SK-N-SH (cell line): ENCODE measurements at regions of chr13 and their contacts with region 1.

Region 1: DNA sequence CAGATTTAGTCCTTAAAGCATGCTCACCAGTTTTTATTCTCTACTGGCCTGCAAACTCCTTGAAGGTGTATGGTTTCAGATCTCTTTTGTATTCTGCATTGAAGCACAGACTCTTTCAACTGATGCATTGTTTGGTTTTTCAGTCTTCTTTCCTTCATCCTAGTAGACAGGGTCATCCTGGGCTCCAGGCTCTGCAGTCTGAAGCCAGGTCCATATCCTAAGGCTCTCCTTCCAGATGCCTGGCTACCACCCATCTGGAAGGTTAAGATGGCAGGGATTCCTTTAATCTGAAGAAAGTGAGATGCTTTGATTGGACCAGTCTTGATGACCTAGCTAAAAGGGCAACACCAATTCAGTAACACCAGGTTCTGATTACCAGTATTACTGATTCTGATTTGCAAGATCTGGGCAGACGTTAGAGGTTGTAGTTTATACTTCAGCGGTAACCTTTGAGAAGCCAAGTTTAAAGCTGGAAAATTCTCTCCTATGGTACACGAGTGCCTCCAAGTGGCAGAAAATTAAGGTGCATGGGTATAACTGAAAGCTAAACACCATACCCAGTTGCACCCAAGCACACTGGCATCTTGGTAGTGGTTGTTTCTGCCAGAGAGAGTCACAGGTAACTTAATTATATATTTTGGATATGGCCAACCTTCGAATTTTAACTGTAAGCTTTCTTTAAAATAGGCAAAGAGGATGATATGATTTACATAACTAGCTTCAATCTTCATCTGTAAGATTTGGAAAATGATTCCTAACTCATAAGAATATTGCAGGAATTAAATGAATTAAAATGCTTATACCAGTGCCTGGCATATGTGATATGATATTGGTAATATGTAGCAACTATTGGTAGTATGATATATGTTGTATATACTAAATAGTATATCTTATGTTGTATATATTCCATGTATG is 1651.9 kb upstream of the MIR17HG start:
- DNase-seq: peak; percentile 42
- H3K4me3 ChIP-seq: no peak overlapping the region
- H3K27ac ChIP-seq: no peak overlapping the region
- H3K4me1 ChIP-seq: peaks cover 0 to 5% of the 10 kb centered on the region in 2 experiments; a peak in 2 of 4 replicates
- H3K27me3 ChIP-seq: no peaks in the 10 kb centered on the region
- CTCF ChIP-seq: peak; percentile 74
- EP300 ChIP-seq: no peak
- RAD21 ChIP-seq: peak; percentile 91

Region 2: DNA sequence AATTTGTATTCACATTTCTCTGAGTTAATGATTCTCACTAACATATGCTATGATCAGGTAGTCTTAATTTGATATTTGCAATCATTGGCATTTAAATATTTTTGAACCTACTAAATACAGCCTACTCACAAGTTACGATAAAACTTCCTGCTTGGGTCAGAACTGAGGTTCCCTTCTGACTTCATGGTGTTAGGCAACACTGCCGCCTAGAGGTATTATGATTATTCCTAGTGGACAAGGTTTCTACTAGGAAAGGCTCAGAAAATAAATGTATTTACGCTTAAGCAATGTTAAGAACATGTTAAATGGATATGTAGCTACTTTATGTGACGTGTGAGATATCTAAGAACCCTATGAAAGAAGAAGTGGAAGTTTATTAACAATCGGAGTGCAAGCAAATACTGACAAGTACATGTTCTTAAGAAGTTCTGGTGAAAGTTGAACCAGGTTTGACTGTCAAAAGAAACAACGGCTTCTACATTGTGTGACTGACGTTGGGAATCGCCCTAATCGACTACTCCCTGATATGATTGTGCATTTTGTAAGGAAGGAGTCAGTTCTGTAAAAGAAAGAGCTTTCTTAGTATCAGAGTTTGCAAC is 628.6 kb before region 1 on chr13:
- CTCF ChIA-PET with region 1: interaction called, 10 read pairs
- POLR2A ChIA-PET with region 1: no interaction called
- DNase-seq: peak; percentile 19
- H3K4me3 ChIP-seq: no peak overlapping the region; a peak in 1 of 4 replicates
- H3K27ac ChIP-seq: no peak overlapping the region
- H3K4me1 ChIP-seq: no peaks in the 10 kb centered on the region
- H3K27me3 ChIP-seq: no peaks in the 10 kb centered on the region
- CTCF ChIP-seq: peak; percentile 70
- EP300 ChIP-seq: no peak
- RAD21 ChIP-seq: peak; percentile 87

Region 3: GRCh38 chr13:89361909-89362308 is 333.7 kb before region 1 on chr13:
- CTCF ChIA-PET with region 1: interaction called, 13 read pairs
- POLR2A ChIA-PET with region 1: no interaction called
- DNase-seq: no peak
- H3K4me3 ChIP-seq: no peak overlapping the region
- H3K27ac ChIP-seq: no peak overlapping the region
- H3K4me1 ChIP-seq: no peaks in the 10 kb centered on the region; a peak in 1 of 4 replicates
- H3K27me3 ChIP-seq: no peaks in the 10 kb centered on the region
- CTCF ChIP-seq: peak; percentile 29
- EP300 ChIP-seq: no peak
- RAD21 ChIP-seq: peak; percentile 19; the same call in 1 of the 2 replicates

Region 4: DNA sequence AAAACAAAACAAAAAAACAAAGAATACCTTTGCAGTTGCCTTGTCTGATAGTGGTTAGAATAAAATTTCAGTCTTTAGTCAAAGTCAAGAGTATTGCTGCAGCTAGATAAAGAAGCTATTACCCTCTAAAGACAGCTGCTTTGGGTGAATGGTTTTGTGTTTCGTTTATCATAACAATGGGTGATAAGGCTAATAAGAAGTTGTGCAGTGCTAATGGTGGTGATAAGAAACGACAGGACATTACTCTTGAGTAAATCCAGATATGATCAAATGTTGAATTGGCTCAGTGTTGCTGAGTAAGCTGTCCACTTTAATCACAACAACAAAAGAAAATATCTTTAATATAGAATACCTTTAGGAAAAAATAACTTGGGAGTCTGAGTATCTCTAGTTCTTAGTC is 199.1 kb before region 1 on chr13:
- CTCF ChIA-PET with region 1: no interaction called
- POLR2A ChIA-PET with region 1: no interaction called
- DNase-seq: peak; percentile 56
- H3K4me3 ChIP-seq: no peak overlapping the region
- H3K27ac ChIP-seq: no peak overlapping the region
- H3K4me1 ChIP-seq: peaks cover 0 to 3% of the 10 kb centered on the region in 2 experiments; a peak in 2 of 4 replicates
- H3K27me3 ChIP-seq: no peaks in the 10 kb centered on the region
- CTCF ChIP-seq: no peak
- EP300 ChIP-seq: peak in 1 of 2 experiments; percentile 97; a peak in 2 of 4 replicates
- RAD21 ChIP-seq: peak; percentile 15; the same call in 1 of the 2 replicates

Region 5: GRCh38 chr13:89708013-89708412 is 12.4 kb after region 1 on chr13:
- CTCF ChIA-PET with region 1: interaction called, 32 read pairs
- POLR2A ChIA-PET with region 1: no interaction called
- DNase-seq: no peak
- H3K4me3 ChIP-seq: no peak overlapping the region
- H3K27ac ChIP-seq: no peak overlapping the region
- H3K4me1 ChIP-seq: no peaks in the 10 kb centered on the region; a peak in 1 of 4 replicates
- H3K27me3 ChIP-seq: no peaks in the 10 kb centered on the region
- CTCF ChIP-seq: no peak
- EP300 ChIP-seq: no peak
- RAD21 ChIP-seq: no peak

Region 6: GRCh38 chr13:90867336-90867683 is 1171.7 kb after region 1 on chr13:
- CTCF ChIA-PET with region 1: interaction called, 26 read pairs
- POLR2A ChIA-PET with region 1: no interaction called
- DNase-seq: peak; percentile 37
- H3K4me3 ChIP-seq: peak overlapping the region in 1 of 2 experiments; percentile 42; a peak in 1 of 4 replicates
- H3K27ac ChIP-seq: no peak overlapping the region
- H3K4me1 ChIP-seq: no peaks in the 10 kb centered on the region
- H3K27me3 ChIP-seq: no peaks in the 10 kb centered on the region
- CTCF ChIP-seq: peak; percentile 84
- EP300 ChIP-seq: no peak
- RAD21 ChIP-seq: peak; percentile 92